ENCODE measurements at regions of chr2 and their contacts with region 1.

Region 1: GRCh38 chr2:62526531-62527381 is 20.8 kb upstream of the TMEM17 start:
- DNase-seq: peak; percentile 99
- ATAC-seq: peak; percentile 98
- H3K4me3 ChIP-seq: no peak overlapping the region; a peak in 1 of 6 replicates
- H3K27ac ChIP-seq: peak overlapping the region; percentile 98
- H3K4me1 ChIP-seq: peaks cover 69% of the 10 kb centered on the region
- H3K27me3 ChIP-seq: no peaks in the 10 kb centered on the region
- CTCF ChIP-seq: peak; percentile 40
- EP300 ChIP-seq: peak in 1 of 2 experiments; percentile 97; a peak in 2 of 4 replicates
- POLR2A ChIP-seq: no peak; a peak in 1 of 4 replicates
- RAD21 ChIP-seq: peak; percentile 56

Region 2: GRCh38 chr2:62456721-62457539 is 69.8 kb before region 1 on chr2:
- CTCF ChIA-PET with region 1: no interaction called
- POLR2A ChIA-PET with region 1: interaction called, 34 read pairs
- in situ Hi-C with region 1: no loop called
- intact Hi-C with region 1: loop called (anchors 2 kb)
- DNase-seq: peak; percentile 63
- ATAC-seq: peak; percentile 97
- H3K4me3 ChIP-seq: peak overlapping the region; percentile 43 to 70 (median 59); a peak in 5 of 6 replicates
- H3K27ac ChIP-seq: peak overlapping the region; percentile 76
- H3K4me1 ChIP-seq: peaks cover 70% of the 10 kb centered on the region
- H3K27me3 ChIP-seq: no peaks in the 10 kb centered on the region
- CTCF ChIP-seq: peak; percentile 99
- EP300 ChIP-seq: peak; percentile 28 to 44; a peak in 1 of 4 replicates
- POLR2A ChIP-seq: peak in 1 of 2 experiments; percentile 28; a peak in 1 of 4 replicates
- RAD21 ChIP-seq: peak; percentile 100

Region 3: DNA sequence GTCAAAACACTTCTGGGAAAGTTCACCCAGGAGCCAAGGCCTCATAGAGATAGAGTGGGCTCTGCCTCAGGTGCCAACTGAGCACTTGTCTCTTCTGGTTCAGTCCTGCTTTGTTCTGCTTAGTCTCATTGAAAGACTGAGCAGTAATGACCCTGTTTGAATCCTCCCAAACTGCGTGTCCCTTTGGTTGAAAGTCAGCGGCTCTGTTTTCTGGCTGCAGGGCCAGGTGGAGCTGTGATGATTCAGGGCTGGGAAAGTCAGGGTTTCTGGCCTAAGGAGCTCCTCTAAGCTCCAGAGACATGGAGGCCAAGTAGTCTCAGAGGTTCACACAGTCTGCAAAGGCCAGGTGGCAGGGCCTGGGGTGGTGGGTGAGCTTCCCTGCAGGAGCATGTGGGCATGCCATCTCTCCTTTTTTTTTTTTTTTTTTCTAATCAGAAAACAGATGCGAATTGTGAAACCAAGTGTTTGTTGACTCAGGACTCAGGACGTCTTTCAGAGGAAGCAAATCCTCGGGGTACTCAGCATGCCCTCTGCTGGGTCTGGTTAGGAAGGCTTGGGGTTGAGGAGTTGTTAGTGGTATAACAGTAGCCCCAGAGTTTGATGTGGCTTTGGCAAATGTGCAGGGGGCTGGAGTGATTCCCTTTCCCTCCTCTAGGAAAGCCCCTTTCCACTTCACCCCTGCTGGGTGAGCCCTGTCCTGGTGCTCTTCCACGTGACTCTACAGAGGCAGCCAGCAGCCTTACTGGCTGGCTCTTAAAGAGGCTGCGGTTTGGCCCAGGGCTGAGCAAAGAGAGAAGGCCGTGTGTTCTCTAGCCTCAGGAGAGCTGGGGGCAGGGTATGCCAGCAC is 59.1 kb before region 1 on chr2:
- CTCF ChIA-PET with region 1: no interaction called
- POLR2A ChIA-PET with region 1: interaction called, 30 read pairs
- in situ Hi-C with region 1: no loop called
- intact Hi-C with region 1: no loop called
- DNase-seq: peak; percentile 71
- ATAC-seq: peak; percentile 82
- H3K4me3 ChIP-seq: peak overlapping the region in 1 of 3 experiments; percentile 39; a peak in 2 of 6 replicates
- H3K27ac ChIP-seq: peak overlapping the region; percentile 51
- H3K4me1 ChIP-seq: peaks cover 87% of the 10 kb centered on the region
- H3K27me3 ChIP-seq: no peaks in the 10 kb centered on the region
- CTCF ChIP-seq: peak; percentile 53
- EP300 ChIP-seq: no peak
- POLR2A ChIP-seq: no peak
- RAD21 ChIP-seq: no peak

Region 4: GRCh38 chr2:62489162-62489561 is 37.6 kb before region 1 on chr2:
- CTCF ChIA-PET with region 1: no interaction called
- POLR2A ChIA-PET with region 1: interaction called, 8 read pairs
- in situ Hi-C with region 1: no loop called
- intact Hi-C with region 1: loop called (anchors 5 kb)
- DNase-seq: no peak
- ATAC-seq: no peak
- H3K4me3 ChIP-seq: no peak overlapping the region
- H3K27ac ChIP-seq: peak overlapping the region; percentile 34
- H3K4me1 ChIP-seq: peaks cover 69% of the 10 kb centered on the region
- H3K27me3 ChIP-seq: no peaks in the 10 kb centered on the region
- CTCF ChIP-seq: no peak
- EP300 ChIP-seq: no peak
- POLR2A ChIP-seq: no peak
- RAD21 ChIP-seq: no peak

Region 5: DNA sequence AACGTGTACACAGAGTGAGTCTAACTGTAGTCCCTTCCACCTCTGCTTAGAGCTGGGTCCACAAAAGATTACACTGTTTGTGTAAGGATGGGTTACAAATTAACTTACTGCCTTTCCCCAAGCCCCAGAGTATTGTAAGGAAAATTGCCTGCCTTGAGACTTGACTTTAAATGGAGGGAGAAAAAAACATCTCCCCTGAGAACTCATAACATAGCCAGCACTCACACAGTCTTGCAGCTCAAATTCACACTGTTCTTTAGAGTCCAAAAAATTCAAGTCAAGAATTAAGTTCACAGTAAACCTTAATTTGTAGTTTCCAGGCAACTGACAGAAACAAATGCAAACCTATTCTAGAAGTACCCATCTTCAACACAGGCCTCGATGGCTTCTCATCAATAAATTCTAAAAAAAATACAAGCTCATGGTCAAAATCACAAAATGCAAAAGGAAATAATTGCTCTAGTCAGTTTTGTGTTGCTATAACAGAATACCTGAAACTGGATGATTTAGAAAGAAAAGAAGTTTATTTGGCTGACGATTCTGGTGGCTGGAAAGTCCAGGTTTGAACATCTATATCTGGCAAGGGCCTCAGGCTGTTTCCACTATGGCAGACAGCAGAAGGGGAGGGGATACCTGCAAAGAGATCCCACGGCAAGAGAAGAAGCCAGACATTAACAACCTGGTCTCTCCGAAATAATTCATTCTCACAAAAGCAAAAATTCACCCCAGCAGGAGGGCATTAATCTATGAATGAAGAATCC is 13.8 kb after region 1 on chr2:
- CTCF ChIA-PET with region 1: no interaction called
- POLR2A ChIA-PET with region 1: interaction called, 193 read pairs
- in situ Hi-C with region 1: no loop called
- intact Hi-C with region 1: loop called (anchors 2 kb)
- DNase-seq: peak; percentile 94
- ATAC-seq: peak; percentile 98
- H3K4me3 ChIP-seq: peak overlapping the region in 1 of 3 experiments; percentile 8; a peak in 1 of 6 replicates
- H3K27ac ChIP-seq: peak overlapping the region; percentile 84
- H3K4me1 ChIP-seq: peaks cover 69% of the 10 kb centered on the region
- H3K27me3 ChIP-seq: no peaks in the 10 kb centered on the region
- CTCF ChIP-seq: no peak
- EP300 ChIP-seq: peak in 1 of 2 experiments; percentile 82; a peak in 2 of 4 replicates
- POLR2A ChIP-seq: peak in 1 of 2 experiments; percentile 35; a peak in 1 of 4 replicates
- RAD21 ChIP-seq: peak; percentile 19; the same call in 1 of the 2 replicates

Region 6: GRCh38 chr2:62577994-62578781 is 51.4 kb after region 1 on chr2:
- CTCF ChIA-PET with region 1: no interaction called
- POLR2A ChIA-PET with region 1: interaction called, 30 read pairs
- in situ Hi-C with region 1: no loop called
- intact Hi-C with region 1: loop called (anchors 2 kb)
- DNase-seq: peak; percentile 96
- ATAC-seq: peak; percentile 78
- H3K4me3 ChIP-seq: no peak overlapping the region
- H3K27ac ChIP-seq: peak overlapping the region; percentile 71
- H3K4me1 ChIP-seq: peaks cover 66% of the 10 kb centered on the region
- H3K27me3 ChIP-seq: no peaks in the 10 kb centered on the region
- CTCF ChIP-seq: no peak
- EP300 ChIP-seq: peak; percentile 46 to 98; a peak in 2 of 4 replicates
- POLR2A ChIP-seq: no peak
- RAD21 ChIP-seq: no peak

Region 7: GRCh38 chr2:62589691-62590356 is 63.1 kb after region 1 on chr2:
- CTCF ChIA-PET with region 1: no interaction called
- POLR2A ChIA-PET with region 1: interaction called, 12 read pairs
- in situ Hi-C with region 1: no loop called
- intact Hi-C with region 1: no loop called
- DNase-seq: peak; percentile 65
- ATAC-seq: peak; percentile 92
- H3K4me3 ChIP-seq: no peak overlapping the region
- H3K27ac ChIP-seq: peak overlapping the region; percentile 52
- H3K4me1 ChIP-seq: peaks cover 58% of the 10 kb centered on the region
- H3K27me3 ChIP-seq: no peaks in the 10 kb centered on the region
- CTCF ChIP-seq: no peak
- EP300 ChIP-seq: 0 out of 4 replicates have a peak, but pooled peaks of 1 of the 2 experiments have one; percentile 35
- POLR2A ChIP-seq: no peak
- RAD21 ChIP-seq: no peak

Region 8: GRCh38 chr2:62687628-62688027 is 160.9 kb after region 1 on chr2:
- CTCF ChIA-PET with region 1: no interaction called
- POLR2A ChIA-PET with region 1: no interaction called
- in situ Hi-C with region 1: no loop called
- intact Hi-C with region 1: no loop called
- DNase-seq: no peak
- ATAC-seq: no peak
- H3K4me3 ChIP-seq: no peak overlapping the region
- H3K27ac ChIP-seq: no peak overlapping the region
- H3K4me1 ChIP-seq: no peaks in the 10 kb centered on the region
- H3K27me3 ChIP-seq: no peaks in the 10 kb centered on the region
- CTCF ChIP-seq: no peak
- EP300 ChIP-seq: no peak
- POLR2A ChIP-seq: no peak
- RAD21 ChIP-seq: no peak